ENCODE measurements at regions of chr11 and their contacts with region 1.

Region 1: GRCh38 chr11:103055221-103055890 is 36.6 kb downstream of the DCUN1D5 start:
- DNase-seq: peak in 4 of 5 donors; percentile 8 to 25 (median 17)
- H3K4me3 ChIP-seq: no peak overlapping the region
- H3K4me3 Mint-ChIP-seq: no peak overlapping the region
- H3K27ac ChIP-seq: no peak overlapping the region
- H3K27ac Mint-ChIP-seq: no peak overlapping the region
- H3K4me1 ChIP-seq: no peaks in the 10 kb centered on the region
- H3K4me1 Mint-ChIP-seq: peaks cover 0 to 2% (median 0%) of the 10 kb centered on the region in 4 donors
- H3K27me3 ChIP-seq: no peaks in the 10 kb centered on the region
- H3K27me3 Mint-ChIP-seq: no peaks in the 10 kb centered on the region

Region 2: DNA sequence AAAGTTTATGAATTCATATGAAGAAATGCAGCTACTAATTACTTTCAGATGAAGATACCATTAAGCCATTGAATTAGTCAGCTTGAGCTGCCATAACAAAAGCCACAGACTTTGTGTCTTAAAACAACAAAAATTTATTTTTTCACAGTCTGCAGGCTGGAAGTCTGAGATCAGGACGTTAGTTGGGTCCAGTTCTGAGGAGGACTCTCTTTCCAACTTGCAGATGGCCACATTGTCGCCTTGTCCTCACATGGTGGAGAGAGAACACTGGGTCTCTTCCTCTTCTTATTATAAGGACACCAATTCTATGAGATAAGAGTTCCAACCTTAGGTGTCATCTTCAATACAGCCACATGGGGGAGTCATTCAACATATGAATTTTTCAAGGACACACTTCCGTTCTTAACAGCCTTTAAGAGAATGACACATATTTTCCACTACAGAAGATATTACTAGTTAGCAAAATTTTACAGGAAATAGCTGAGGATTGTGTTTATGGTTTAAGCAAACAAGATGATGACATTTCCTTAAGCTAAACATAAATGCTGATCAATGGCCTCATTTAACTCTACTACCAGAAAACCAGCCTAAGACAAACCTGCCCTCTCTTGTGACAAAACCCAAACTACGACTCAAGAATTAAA is 19.4 kb before region 1 on chr11:
- CTCF ChIA-PET with region 1: interaction called, 12 read pairs
- POLR2A ChIA-PET with region 1: interaction called, 3 read pairs
- intact Hi-C with region 1: loop called (anchors 1 kb)
- DNase-seq: peak; percentile 54 to 74 (median 64)
- H3K4me3 ChIP-seq: no peak overlapping the region
- H3K4me3 Mint-ChIP-seq: peak overlapping the region in 4 of 8 donors; percentile 9 to 43 (median 27)
- H3K27ac ChIP-seq: no peak overlapping the region
- H3K27ac Mint-ChIP-seq: peak overlapping the region in 6 of 7 donors; percentile 12 to 81 (median 38)
- H3K4me1 ChIP-seq: peaks cover 8% of the 10 kb centered on the region
- H3K4me1 Mint-ChIP-seq: peaks cover 6 to 8% (median 6%) of the 10 kb centered on the region in 4 donors
- H3K27me3 ChIP-seq: no peaks in the 10 kb centered on the region
- H3K27me3 Mint-ChIP-seq: peaks cover 0 to 2% of the 10 kb centered on the region in 2 donors